H1 (cell line): ENCODE measurements at regions of chr15 and their contacts with region 1.

Region 1: DNA sequence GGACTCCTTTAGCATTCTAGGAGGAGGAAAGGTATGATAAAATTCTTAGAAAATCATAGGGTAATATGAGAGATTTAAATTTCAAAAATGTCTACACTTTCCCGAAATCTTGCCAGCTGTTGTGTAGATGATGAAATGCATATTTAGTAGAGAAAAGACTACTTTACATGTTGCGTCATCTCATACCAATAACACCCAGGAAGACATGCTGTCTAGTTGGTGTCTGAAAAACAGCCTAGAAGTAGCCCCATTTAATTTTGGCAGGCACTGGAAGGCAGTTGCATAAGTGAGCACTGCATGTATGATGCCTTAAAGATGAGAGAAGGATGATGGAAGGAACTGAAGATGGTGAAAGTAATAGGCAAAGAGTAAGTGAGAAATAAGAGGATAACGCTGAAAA is 310.5 kb upstream of the TPM1 start:
- DNase-seq: no peak
- H3K4me3 ChIP-seq: no peak overlapping the region
- H3K27ac ChIP-seq: no peak overlapping the region
- H3K4me1 ChIP-seq: peaks cover 0 to 6% (median 5%) of the 10 kb centered on the region in 4 experiments; a peak in 5 of 7 replicates
- H3K27me3 ChIP-seq: no peaks in the 10 kb centered on the region
- CTCF ChIP-seq: no peak
- EP300 ChIP-seq: no peak
- POLR2A ChIP-seq: no peak
- RAD21 ChIP-seq: no peak

Region 2: GRCh38 chr15:62749036-62749815 is 17.1 kb after region 1 on chr15:
- CTCF ChIA-PET with region 1: interaction called, 41 read pairs
- POLR2A ChIA-PET with region 1: no interaction called
- DNase-seq: no peak
- H3K4me3 ChIP-seq: no peak overlapping the region
- H3K27ac ChIP-seq: no peak overlapping the region
- H3K4me1 ChIP-seq: peaks cover 0 to 10% (median 7%) of the 10 kb centered on the region in 4 experiments; a peak in 5 of 7 replicates
- H3K27me3 ChIP-seq: no peaks in the 10 kb centered on the region
- CTCF ChIP-seq: no peak
- EP300 ChIP-seq: no peak
- POLR2A ChIP-seq: no peak
- RAD21 ChIP-seq: no peak